ENCODE measurements at regions of chr11 and their contacts with region 1.

Region 1: DNA sequence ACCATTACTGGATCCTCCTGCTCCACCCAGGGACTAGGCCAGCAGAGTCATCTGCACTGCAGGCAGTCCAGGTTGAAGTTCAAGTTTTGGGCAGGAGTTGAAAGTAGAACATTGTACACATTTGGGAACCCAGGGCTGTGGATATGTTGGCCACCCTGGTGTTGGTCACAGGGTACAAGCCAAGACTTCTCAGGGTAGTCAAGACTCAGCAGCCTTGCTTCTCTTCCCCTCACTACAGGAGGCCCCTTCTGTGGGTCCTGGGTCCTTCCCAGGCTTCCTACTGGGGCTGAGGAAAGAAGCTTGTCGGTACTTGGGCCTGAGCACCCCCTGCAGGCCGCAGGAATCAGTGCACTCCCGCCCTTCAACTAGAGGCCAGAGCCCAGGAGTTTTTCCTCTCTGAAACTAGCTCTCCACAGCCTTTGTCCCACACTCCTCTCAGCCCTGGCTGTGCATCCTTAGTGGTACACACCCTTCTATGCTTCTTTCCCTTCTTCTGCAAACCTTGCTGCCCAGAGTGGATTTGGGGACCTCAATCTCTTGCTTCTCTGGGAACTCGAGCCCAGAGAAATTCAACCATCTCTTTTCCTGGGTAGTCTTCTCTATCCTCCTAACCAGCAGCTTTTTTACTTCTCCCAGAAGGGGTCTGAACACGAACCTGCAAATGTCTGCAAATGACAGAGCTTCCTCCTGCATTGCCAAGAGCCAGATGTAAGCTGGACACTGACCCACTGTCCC is 2.6 kb upstream of the HPX start:
- DNase-seq: no peak
- H3K4me3 ChIP-seq: no peak overlapping the region
- H3K27ac ChIP-seq: peak overlapping the region; percentile 47 to 64
- H3K4me1 ChIP-seq: peaks cover 0 to 3% of the 10 kb centered on the region in 2 donors
- H3K27me3 ChIP-seq: no peaks in the 10 kb centered on the region
- CTCF ChIP-seq: peak; percentile 55 to 69 (median 60)

Region 2: DNA sequence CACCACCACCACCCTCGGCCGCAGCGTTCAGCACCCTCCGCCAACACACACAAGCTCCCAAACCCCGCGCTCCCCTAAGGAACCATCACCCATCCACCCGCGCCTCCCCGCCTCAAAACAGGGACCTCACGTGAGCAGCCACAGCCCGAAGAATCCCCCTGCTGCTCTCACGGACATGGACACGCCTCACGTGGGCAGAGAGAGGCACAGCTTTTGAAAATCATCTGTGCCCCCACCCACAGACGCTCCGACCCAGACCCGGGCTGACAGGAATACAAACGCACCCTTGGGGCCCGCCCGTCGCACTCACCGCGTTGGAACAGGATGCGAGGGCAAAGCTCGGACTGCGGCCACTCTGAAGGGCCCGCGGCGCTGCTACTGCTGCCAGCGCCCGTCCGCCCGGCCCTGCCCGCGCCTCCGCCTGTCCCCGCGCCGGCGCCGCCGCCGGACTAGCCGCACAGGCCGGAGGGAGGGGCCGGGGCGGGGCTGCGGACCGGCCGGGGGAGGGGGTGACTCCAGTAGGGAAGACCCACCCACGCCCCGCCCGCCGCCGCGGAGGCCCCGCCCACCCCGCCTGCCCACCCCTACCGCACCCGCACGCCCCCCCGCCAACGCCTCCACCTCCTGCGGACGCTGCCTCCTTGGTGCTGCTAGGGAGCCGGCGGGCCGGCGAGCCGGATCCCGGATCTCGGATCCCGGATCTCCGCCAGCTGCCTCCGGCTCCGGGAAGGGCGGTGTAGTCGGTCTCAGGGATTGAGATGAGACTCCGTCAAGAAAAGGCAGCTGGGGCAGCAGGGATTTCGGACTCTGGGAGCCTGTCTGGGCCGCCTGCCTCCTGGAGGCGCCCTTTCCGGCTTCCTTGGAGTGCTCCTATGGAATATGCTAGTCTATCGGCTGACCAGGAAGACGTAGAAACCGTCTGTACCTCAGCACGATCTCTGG is 30.3 kb after region 1 on chr11 and contains the start of gene TRIM3:
- intact Hi-C with region 1: loop called (anchors 2 kb)
- DNase-seq: peak; percentile 74 to 96
- H3K4me3 ChIP-seq: peak within 1 kb of the TSS; percentile 85 to 88
- H3K27ac ChIP-seq: peak within 1 kb of the TSS; percentile 94 to 96
- H3K4me1 ChIP-seq: peaks cover 7 to 24% of the 10 kb centered on the region in 2 donors
- H3K27me3 ChIP-seq: no peaks in the 10 kb centered on the region
- CTCF ChIP-seq: peak in 2 of 3 experiments; percentile 22 to 39
- total RNA-seq, gene TRIM3: 33.8 TPM

Region 3: DNA sequence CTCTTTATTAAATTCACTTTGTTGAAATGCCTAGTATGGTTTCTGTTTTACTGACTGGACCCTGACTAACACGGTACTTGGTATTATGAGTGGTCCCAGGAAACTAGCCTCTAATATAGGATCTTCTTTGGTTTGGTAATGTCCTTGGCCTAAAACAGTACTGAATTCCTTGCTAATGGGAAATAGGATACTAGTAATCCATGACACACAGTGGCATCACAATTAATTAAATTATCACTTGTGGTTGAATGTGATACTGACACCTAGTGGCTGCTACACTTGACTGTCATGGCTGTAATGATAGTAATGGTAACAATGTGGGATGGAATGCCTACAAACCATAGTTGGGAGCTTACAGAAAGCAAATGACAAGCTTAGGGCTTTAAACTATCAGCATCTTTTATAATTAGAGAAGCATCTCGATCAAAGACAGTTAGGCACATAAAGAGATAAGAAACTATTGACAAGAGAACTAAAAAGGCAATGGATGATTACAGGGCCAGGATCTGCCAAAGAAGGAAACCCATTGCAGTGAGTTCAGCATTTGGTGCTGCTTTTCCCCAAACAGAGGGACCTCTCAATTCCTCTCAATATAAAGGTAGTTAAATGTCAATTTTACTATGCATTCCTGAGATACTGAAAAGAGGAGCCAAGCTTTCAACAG is 62.3 kb after region 1 on chr11:
- intact Hi-C with region 1: loop called (anchors 2 kb)
- DNase-seq: no peak
- H3K4me3 ChIP-seq: no peak overlapping the region
- H3K27ac ChIP-seq: peak overlapping the region in 1 of 2 donors; percentile 15
- H3K4me1 ChIP-seq: no peaks in the 10 kb centered on the region
- H3K27me3 ChIP-seq: no peaks in the 10 kb centered on the region
- CTCF ChIP-seq: peak; percentile 55 to 70 (median 62)

Measured in ascending aorta (tissue), 2 donors.